Right lobe of liver (tissue), 6 donors: ENCODE measurements at regions of chr2 and their contacts with region 1.

Region 1: GRCh38 chr2:178796079-178796677 is 11.0 kb downstream of the TTN start:
- DNase-seq: no peak
- ATAC-seq: peak in 2 of 4 donors; percentile 33 to 38
- H3K4me3 ChIP-seq: no peak overlapping the region
- H3K27ac ChIP-seq: no peak overlapping the region
- H3K4me1 ChIP-seq: no peaks in the 10 kb centered on the region
- H3K27me3 ChIP-seq: no peaks in the 10 kb centered on the region
- CTCF ChIP-seq: peak; percentile 52 to 65 (median 58)
- POLR2A ChIP-seq: no peak

Region 2: DNA sequence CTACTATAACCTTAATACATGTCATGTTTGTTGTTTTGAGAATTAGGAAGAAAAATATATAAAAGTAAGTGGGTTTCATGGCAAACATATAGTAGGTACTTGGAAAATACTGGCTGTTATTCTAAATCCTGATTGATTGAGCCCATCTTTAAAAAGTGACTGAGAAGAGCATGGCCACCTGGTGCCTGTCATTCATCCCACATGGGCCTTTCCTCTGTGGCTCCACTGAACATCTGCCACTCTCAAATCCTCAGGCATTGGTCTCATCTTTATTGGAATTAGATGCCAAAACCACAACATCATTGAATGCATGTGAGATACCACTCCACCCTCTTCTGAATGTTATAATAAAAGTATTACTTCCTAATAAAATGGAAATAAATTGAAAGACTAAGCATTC is 112.6 kb after region 1 on chr2:
- intact Hi-C with region 1: loop called in 1 of 2 experiments (anchors 10 kb)
- DNase-seq: no peak
- ATAC-seq: no peak
- H3K4me3 ChIP-seq: no peak overlapping the region
- H3K27ac ChIP-seq: no peak overlapping the region
- H3K4me1 ChIP-seq: no peaks in the 10 kb centered on the region
- H3K27me3 ChIP-seq: no peaks in the 10 kb centered on the region
- CTCF ChIP-seq: no peak
- POLR2A ChIP-seq: no peak

Region 3: DNA sequence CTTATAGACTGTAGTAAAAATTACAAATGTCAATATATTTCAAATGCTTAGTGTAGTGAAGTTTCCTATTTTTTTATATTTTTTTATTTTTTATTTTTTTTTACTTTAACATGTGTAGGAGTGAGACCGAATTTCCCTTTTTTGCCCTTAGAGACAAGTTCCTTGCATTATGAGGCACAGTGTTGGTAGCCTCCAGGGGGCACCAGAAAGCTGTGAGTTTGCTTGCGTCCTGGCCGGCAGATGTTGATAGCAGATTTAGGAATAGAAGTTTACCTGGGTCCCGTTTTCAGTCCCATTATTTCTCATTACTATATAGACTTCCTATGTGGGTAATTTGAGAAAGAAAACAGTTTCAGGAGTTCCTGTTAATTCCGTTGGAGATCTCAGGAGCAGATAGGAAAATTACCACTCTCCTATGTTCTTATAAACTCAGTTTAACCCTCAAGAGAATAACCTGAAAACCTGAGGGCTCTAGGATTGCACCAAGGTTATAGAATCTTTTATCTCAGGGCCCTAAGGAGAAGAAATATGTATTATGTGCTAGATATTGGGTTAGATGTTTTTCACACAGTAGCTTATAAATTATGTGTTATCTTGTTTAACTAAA is 626.0 kb after region 1 on chr2:
- intact Hi-C with region 1: loop called in 1 of 2 experiments (anchors 10 kb)
- DNase-seq: peak; percentile 70 to 75 (median 71)
- ATAC-seq: peak; percentile 94 to 95 (median 94)
- H3K4me3 ChIP-seq: no peak overlapping the region
- H3K27ac ChIP-seq: no peak overlapping the region
- H3K4me1 ChIP-seq: no peaks in the 10 kb centered on the region
- H3K27me3 ChIP-seq: no peaks in the 10 kb centered on the region
- CTCF ChIP-seq: peak; percentile 77 to 84 (median 78)
- POLR2A ChIP-seq: no peak